ENCODE measurements at regions of chr17 and their contacts with region 1.

Region 1: DNA sequence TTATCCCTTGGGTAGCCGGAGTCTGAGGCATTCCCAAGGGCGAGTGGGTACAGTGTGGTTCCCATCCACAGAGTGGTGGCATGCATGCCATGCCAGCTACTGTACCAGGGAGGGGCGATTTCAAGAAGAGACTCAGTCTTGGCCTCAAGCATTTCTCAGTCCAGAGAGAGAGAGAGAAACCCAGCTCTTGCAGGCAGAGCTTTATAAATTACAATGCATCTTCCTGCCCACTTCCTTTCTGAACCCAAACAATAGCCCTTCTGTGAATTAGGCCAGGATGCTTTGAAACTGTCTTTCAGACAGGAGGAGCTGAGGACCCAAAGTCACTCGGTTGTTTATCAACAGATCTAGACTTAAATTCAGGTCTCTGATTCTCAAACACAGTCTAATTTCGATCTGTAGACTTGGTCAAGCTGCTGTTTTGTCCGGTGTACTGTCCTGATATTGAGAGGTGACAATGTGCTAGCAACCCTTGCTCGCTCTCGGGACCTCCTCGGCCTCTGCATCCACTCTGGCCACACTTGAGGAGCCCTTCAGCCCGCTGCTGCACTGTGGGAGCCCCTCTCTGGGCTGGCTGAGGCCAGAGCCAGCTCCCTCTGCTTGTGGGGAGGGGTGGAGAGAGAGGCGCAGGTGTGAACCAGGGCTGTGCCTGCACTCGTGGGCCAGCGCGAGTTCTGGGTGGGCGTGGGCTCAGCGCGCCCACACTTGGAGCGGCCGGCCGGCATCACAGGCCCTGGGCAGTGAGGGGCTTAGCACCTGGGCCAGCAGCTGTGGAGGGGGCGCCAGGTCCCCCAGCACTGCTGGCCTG is 408.0 kb downstream of the UTP18 start:
- DNase-seq: peak; percentile 52
- H3K4me3 ChIP-seq: no peak overlapping the region
- H3K27ac ChIP-seq: peak overlapping the region; percentile 19
- H3K4me1 ChIP-seq: peaks cover 34% of the 10 kb centered on the region
- H3K27me3 ChIP-seq: no peaks in the 10 kb centered on the region
- CTCF ChIP-seq: no peak

Region 2: DNA sequence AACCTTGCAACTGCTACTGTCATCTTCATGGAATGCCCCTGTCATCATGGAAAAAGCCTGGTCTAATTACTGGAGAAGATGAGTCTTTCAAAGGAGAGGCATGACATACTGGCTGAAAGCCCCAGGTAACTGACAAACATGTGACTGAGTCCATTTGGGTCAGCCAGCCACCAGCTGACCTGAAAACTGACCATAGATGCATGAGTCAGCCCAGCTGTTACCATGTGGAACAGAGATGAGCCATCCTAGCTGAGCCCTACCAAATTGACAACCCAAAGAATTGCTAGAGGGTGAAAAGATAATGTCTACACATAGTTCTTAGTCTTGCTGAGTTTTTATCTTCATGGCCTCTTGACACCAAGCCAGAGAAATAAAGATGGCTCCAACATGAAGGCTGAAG is 96.2 kb before region 1 on chr17:
- CTCF ChIA-PET with region 1: no interaction called
- dilution Hi-C with region 1: no loop called
- in situ Hi-C with region 1: no loop called
- intact Hi-C with region 1: no loop called
- DNase-seq: peak; percentile 5
- H3K4me3 ChIP-seq: no peak overlapping the region
- H3K27ac ChIP-seq: no peak overlapping the region
- H3K4me1 ChIP-seq: no peaks in the 10 kb centered on the region
- H3K27me3 ChIP-seq: no peaks in the 10 kb centered on the region
- CTCF ChIP-seq: no peak

Region 3: DNA sequence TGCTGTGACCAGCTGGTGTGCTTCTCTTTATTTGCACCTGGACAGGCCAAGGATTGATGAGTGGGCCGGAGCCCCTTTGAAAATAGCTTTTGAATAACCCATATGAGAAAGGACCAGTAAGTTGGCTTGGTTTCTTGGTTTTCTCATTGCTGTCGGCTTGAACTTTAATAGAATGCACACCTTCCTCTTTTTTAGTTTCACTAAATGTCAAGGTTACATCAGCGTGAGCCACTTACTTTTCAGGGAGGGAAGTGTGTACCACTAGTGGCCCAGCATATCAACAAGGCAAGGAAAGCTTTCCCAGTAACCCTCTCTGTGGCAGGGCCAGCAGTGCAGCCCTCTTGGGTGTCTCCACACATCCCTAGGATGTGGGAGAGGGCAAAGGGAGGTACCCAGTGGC is 56.8 kb after region 1 on chr17:
- CTCF ChIA-PET with region 1: no interaction called
- dilution Hi-C with region 1: no loop called
- in situ Hi-C with region 1: loop called in 1 of 2 experiments (anchors 10 kb)
- intact Hi-C with region 1: no loop called
- DNase-seq: no peak
- H3K4me3 ChIP-seq: no peak overlapping the region
- H3K27ac ChIP-seq: no peak overlapping the region
- H3K4me1 ChIP-seq: no peaks in the 10 kb centered on the region
- H3K27me3 ChIP-seq: peaks cover 3% of the 10 kb centered on the region
- CTCF ChIP-seq: no peak

Region 4: DNA sequence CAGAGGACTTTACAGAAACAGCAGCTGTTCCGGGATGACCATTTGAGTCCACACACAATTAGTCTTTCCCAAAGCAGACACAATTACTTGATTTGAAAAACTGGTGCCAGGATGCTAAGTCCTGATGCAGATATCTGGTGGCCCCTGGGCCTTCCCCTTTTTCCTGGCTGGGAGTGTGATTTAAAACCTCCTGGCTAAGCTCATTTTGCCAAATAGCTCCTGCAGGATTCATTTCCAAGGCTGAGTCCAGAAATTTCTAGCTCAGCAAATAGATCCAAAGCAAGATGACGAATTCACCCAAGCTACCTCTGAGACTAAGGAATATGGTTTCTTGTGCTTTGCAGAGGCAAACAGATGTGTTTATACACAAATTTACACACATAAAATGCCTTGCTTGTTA is 68.0 kb after region 1 on chr17:
- CTCF ChIA-PET with region 1: no interaction called
- dilution Hi-C with region 1: no loop called
- in situ Hi-C with region 1: no loop called
- intact Hi-C with region 1: no loop called
- DNase-seq: no peak
- H3K4me3 ChIP-seq: no peak overlapping the region
- H3K27ac ChIP-seq: no peak overlapping the region
- H3K4me1 ChIP-seq: no peaks in the 10 kb centered on the region
- H3K27me3 ChIP-seq: no peaks in the 10 kb centered on the region
- CTCF ChIP-seq: no peak

Measured in mammary epithelial cell (primary cell).